ENCODE measurements at regions of chr12 and their contacts with region 1.

Region 1: GRCh38 chr12:69570545-69571399 is 14.5 kb upstream of the CCT2 start:
- DNase-seq: peak in 1 of 2 experiments; percentile 63
- H3K4me3 ChIP-seq: no peak overlapping the region
- H3K27ac ChIP-seq: no peak overlapping the region
- H3K4me1 ChIP-seq: no peaks in the 10 kb centered on the region
- H3K27me3 ChIP-seq: peaks cover 0 to 1% (median 0%) of the 10 kb centered on the region in 4 experiments; a peak in 1 of 7 replicates
- CTCF ChIP-seq: peak in 2 of 3 experiments; percentile 72 to 76; a peak in 3 of 4 replicates
- EP300 ChIP-seq: no peak
- POLR2A ChIP-seq: no peak
- RAD21 ChIP-seq: peak; percentile 79

Region 2: DNA sequence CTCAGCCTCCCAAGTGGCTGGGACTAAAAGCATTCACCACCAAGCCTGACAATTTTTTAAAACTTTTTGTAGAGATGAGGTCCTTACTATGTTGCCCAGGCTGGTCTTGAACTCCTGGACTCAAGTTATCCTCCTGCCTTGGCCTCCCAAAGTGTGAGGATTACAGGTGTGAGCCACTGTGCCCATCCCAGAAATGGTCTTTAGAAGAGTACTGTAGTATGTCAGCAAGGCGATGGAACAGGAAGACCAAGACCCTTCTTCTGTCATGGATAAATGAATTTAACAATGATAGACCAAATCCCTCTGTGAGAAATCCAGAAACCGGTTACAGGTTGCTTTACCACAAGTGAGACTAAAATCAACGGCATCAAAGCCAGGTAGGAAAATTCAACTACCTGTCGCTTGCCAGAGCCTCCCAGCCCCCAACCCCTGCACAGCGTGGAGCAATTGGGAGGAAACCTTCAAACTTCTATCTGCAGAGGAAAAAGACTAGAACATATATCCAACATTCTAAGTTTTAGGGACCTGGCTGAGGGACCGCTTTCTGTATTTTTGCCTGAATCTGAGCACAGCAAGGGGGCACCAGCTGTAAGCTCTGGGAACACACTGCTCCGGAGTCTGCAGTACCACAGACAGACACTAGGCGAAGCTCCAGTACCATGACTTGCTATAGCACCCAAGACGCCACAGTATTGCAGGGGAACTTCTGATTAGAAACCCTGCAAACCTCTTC is 280.1 kb before region 1 on chr12:
- CTCF ChIA-PET with region 1: interaction called, 12 read pairs
- POLR2A ChIA-PET with region 1: no interaction called
- DNase-seq: peak; percentile 73 to 91
- H3K4me3 ChIP-seq: no peak overlapping the region
- H3K27ac ChIP-seq: no peak overlapping the region
- H3K4me1 ChIP-seq: no peaks in the 10 kb centered on the region; a peak in 1 of 7 replicates
- H3K27me3 ChIP-seq: no peaks in the 10 kb centered on the region
- CTCF ChIP-seq: peak; percentile 89 to 100 (median 98)
- EP300 ChIP-seq: no peak
- POLR2A ChIP-seq: no peak
- RAD21 ChIP-seq: peak; percentile 99

Region 3: GRCh38 chr12:69359531-69360347 is 211.0 kb before region 1 on chr12 and contains the start of gene YEATS4:
- CTCF ChIA-PET with region 1: interaction called, 57 read pairs
- POLR2A ChIA-PET with region 1: interaction called, 8 read pairs
- DNase-seq: peak; percentile 65 to 85
- H3K4me3 ChIP-seq: peak within 1 kb of the TSS; percentile 37 to 83 (median 75)
- H3K27ac ChIP-seq: peak within 1 kb of the TSS; percentile 97
- H3K4me1 ChIP-seq: peaks cover 0 to 2% (median under 1%) of the 10 kb centered on the region in 4 experiments; a peak in 5 of 7 replicates
- H3K27me3 ChIP-seq: no peaks in the 10 kb centered on the region
- CTCF ChIP-seq: no peak
- EP300 ChIP-seq: no peak
- POLR2A ChIP-seq: peak; percentile 78 to 91; a peak in 2 of 3 replicates
- RAD21 ChIP-seq: no peak
- total RNA-seq, gene YEATS4: 32.4 and 32.5 TPM in 2 replicates

Region 4: DNA sequence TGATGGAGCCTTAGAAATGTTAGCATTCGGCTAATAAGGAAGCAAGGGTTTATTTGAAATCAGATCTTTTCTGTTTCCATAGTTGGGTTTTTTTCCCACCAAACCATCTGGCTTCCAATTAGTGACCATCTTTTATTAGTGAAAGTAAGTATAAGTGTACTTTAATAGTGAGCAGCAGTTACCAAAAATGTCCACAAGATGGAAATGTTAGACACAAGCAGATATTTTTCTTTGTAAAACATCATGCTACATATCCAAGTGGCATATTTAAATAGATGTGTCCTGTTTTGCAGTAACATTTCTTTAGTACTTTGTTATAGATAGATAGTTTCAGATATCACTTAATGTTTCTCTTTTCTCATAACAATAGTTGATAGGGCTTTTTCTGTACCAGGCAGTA is 182.4 kb before region 1 on chr12:
- CTCF ChIA-PET with region 1: interaction called, 23 read pairs
- POLR2A ChIA-PET with region 1: no interaction called
- DNase-seq: no peak
- H3K4me3 ChIP-seq: no peak overlapping the region
- H3K27ac ChIP-seq: no peak overlapping the region
- H3K4me1 ChIP-seq: no peaks in the 10 kb centered on the region
- H3K27me3 ChIP-seq: peaks cover 0 to 1% (median 0%) of the 10 kb centered on the region in 4 experiments; a peak in 1 of 7 replicates
- CTCF ChIP-seq: no peak
- EP300 ChIP-seq: no peak
- POLR2A ChIP-seq: no peak
- RAD21 ChIP-seq: no peak; a peak in 1 of 4 replicates

Region 5: GRCh38 chr12:69548687-69549086 is 22.1 kb before region 1 on chr12:
- CTCF ChIA-PET with region 1: interaction called, 32 read pairs
- POLR2A ChIA-PET with region 1: interaction called, 4 read pairs
- DNase-seq: no peak
- H3K4me3 ChIP-seq: no peak overlapping the region
- H3K27ac ChIP-seq: no peak overlapping the region
- H3K4me1 ChIP-seq: peaks cover 0 to 2% (median 0%) of the 10 kb centered on the region in 4 experiments; a peak in 1 of 7 replicates
- H3K27me3 ChIP-seq: no peaks in the 10 kb centered on the region
- CTCF ChIP-seq: no peak
- EP300 ChIP-seq: no peak
- POLR2A ChIP-seq: no peak
- RAD21 ChIP-seq: no peak

Region 6: GRCh38 chr12:69553627-69554248 is 17.0 kb before region 1 on chr12:
- CTCF ChIA-PET with region 1: interaction called, 32 read pairs
- POLR2A ChIA-PET with region 1: interaction called, 4 read pairs
- DNase-seq: no peak
- H3K4me3 ChIP-seq: no peak overlapping the region
- H3K27ac ChIP-seq: no peak overlapping the region
- H3K4me1 ChIP-seq: peaks cover 0 to 2% (median 0%) of the 10 kb centered on the region in 4 experiments; a peak in 1 of 7 replicates
- H3K27me3 ChIP-seq: no peaks in the 10 kb centered on the region
- CTCF ChIP-seq: no peak
- EP300 ChIP-seq: no peak
- POLR2A ChIP-seq: no peak
- RAD21 ChIP-seq: no peak

Region 7: DNA sequence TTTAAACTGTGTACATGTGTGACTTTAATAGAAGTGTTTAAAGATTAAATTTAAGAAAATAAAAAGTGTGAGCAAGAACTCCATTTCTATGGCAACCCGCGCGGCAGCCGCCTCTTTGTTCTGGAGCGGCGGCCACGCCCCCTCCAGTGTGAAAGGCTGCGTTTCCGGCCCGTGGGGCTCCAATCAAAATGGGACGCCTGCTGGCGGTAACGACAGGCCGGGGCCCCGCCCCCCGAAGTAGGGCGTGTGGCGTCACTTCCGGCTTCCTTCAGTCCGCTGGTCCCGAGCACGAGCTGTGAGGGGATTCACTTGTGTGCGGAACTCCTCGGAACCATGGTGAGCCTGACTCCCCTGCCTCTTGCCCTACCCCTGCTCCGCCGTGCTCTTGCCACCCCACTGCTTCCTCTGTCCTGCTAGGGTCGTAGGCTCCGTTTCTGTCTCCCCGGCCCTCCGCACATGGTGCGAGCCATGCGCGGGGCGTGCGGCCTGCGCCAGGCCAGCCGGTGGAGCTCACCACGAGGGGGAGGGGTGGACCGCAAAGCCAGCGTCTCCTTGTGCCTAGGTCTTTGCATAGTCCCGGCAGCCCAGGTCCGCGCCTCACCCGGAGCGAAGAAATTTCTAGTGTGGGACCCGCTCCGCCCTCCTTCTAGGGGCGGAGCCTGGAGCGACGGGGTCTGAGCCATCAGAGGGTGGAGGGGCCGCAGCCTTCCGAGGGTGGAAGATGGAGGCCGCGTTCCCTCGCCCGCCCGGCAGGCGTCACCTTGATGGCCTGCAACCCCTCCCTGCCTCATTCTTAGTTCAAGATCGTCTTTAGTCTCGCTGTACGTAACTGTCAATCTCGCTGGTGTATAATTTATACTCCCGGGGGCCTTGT is 14.7 kb after region 1 on chr12 and contains the start of gene CCT2:
- CTCF ChIA-PET with region 1: interaction called, 69 read pairs
- POLR2A ChIA-PET with region 1: interaction called, 11 read pairs
- DNase-seq: peak; percentile 85 to 96
- H3K4me3 ChIP-seq: peak within 1 kb of the TSS; percentile 68 to 99 (median 90)
- H3K27ac ChIP-seq: peak within 1 kb of the TSS; percentile 97
- H3K4me1 ChIP-seq: no peaks in the 10 kb centered on the region
- H3K27me3 ChIP-seq: no peaks in the 10 kb centered on the region
- CTCF ChIP-seq: peak; percentile 17 to 58 (median 48); a peak in 2 of 4 replicates
- EP300 ChIP-seq: no peak
- POLR2A ChIP-seq: peak; percentile 92 to 98
- RAD21 ChIP-seq: peak in 1 of 2 experiments; percentile 1; a peak in 1 of 4 replicates
- total RNA-seq, gene CCT2: 409 and 419 TPM in 2 replicates

Region 8: GRCh38 chr12:69738351-69739286 is 167.8 kb after region 1 on chr12 and contains the start of gene RAB3IP:
- CTCF ChIA-PET with region 1: no interaction called
- POLR2A ChIA-PET with region 1: no interaction called
- DNase-seq: peak; percentile 56 to 96
- H3K4me3 ChIP-seq: peak within 1 kb of the TSS; percentile 53 to 88 (median 72)
- H3K27ac ChIP-seq: no peak within 1 kb of the TSS
- H3K4me1 ChIP-seq: peaks cover 0 to 2% (median 0%) of the 10 kb centered on the region in 4 experiments; a peak in 1 of 7 replicates
- H3K27me3 ChIP-seq: peaks cover 0 to 7% (median 2%) of the 10 kb centered on the region in 4 experiments; a peak in 3 of 7 replicates
- CTCF ChIP-seq: peak; percentile 55 to 67 (median 56)
- EP300 ChIP-seq: peak in 1 of 2 experiments; percentile 59; a peak in 1 of 3 replicates
- POLR2A ChIP-seq: peak; percentile 48 to 57
- RAD21 ChIP-seq: peak; percentile 8 to 42; a peak in 2 of 4 replicates
- total RNA-seq, gene RAB3IP: 30.2 and 34.6 TPM in 2 replicates